Activated CD4-positive, alpha-beta memory T cell treated with anti-CD3 and anti-CD28 coated beads, Interleukin-2, amount 10 ng/mL, durations not matched to agents 7 days and 5 days (primary cell): ENCODE measurements at regions of chr17 and their contacts with region 1.

Region 1: DNA sequence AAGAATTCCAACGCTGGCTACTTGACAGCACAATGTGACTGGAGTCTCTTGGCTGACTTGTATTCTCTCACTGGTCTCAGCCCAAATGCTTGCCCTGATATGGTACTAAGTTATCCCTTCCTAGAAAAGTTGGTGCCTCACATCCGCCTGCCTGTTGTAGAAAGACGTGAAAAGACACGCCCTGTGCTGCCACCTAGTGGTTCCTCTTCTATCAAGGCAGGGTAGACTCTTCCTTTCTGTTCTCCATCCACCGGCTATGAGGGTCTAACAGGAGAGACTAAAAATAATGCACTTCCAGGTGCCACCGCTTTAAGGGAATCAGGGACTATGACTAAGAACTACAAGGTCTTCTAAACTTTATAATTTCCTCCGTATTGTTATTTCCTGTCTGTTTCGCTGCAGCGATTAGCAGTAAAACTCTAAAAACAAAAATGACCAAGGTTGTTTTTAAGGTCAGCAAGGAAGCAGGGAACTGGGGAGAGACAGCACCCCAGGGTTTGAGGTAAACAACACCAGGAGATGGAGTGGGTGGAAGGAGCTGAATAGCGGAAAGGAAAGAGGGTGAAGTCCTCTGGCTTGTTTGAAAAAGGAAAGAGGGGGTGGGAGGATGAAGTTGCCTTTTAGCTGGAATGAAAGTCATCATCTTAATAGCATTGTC is 109.5 kb downstream of the YPEL2 start:
- DNase-seq: peak; percentile 92
- H3K4me3 Mint-ChIP-seq: peak overlapping the region; percentile 60
- H3K27ac Mint-ChIP-seq: peak overlapping the region; percentile 77
- H3K4me1 Mint-ChIP-seq: peaks cover 55% of the 10 kb centered on the region
- H3K27me3 Mint-ChIP-seq: no peaks in the 10 kb centered on the region

Region 2: DNA sequence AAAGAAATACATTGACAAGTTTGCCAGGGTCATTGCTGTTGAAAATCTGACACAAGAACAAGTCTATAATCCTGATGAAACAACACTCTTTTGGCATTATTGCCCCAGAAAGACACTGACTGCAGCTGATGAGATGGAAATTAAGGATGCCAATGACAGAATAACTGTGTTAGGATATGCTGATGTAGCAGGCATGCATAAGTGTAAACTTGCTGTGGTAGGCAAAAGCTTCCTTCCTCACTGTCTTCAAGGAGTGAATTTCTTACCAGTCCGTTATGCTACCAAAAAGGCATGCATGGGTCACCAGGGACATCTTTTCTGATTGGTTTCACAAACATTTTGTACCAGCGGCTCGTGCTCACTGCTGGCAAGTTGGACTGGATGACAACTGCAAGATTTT is 210.1 kb before region 1 on chr17:
- CTCF ChIA-PET with region 1: no interaction called
- POLR2A ChIA-PET with region 1: no interaction called
- DNase-seq: no peak
- H3K4me3 Mint-ChIP-seq: no peak overlapping the region
- H3K27ac Mint-ChIP-seq: no peak overlapping the region
- H3K4me1 Mint-ChIP-seq: peaks cover 4% of the 10 kb centered on the region
- H3K27me3 Mint-ChIP-seq: no peaks in the 10 kb centered on the region

Region 3: DNA sequence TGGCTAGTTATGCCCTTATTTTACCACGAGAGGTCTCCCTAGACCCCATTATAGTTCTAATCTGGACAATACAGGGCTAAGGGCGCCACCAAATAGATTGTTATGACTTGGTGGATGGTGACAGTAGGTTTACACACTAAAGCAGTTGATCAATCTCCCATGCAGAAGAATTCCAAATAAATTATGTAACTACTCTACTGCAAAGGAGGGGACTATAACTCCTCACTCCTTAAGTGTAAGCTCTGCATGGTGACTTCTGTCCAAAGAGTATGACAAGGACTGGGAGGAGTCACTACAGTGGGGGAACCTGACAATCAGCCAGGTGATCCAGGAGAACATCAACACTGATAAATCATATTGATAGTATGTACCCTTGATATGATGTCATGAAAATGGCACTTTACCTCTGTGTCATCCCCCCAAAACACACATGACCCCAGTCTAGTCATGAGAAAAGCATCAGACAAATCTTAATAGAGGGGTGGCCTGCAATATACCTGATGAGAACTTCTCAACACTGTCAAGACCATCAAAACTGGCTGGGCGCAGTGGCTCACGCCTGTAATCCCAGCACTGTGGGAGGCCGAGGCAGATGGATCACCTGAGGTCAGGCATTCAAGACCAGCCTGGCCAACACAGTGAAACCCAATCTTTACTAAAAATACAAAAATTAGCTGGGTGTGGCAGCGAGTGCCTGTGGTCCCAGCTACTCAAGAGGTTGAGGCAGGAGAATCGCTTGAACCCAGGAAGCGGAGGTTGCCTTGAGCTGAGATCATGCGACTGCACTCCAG is 129.6 kb before region 1 on chr17:
- CTCF ChIA-PET with region 1: interaction called, 192 read pairs
- POLR2A ChIA-PET with region 1: interaction called, 7 read pairs
- DNase-seq: peak; percentile 47
- H3K4me3 Mint-ChIP-seq: no peak overlapping the region
- H3K27ac Mint-ChIP-seq: no peak overlapping the region
- H3K4me1 Mint-ChIP-seq: peaks cover 6% of the 10 kb centered on the region
- H3K27me3 Mint-ChIP-seq: no peaks in the 10 kb centered on the region

Region 4: GRCh38 chr17:59331129-59331928 is 109.6 kb before region 1 on chr17 and contains the start of gene YPEL2:
- CTCF ChIA-PET with region 1: interaction called, 187 read pairs
- POLR2A ChIA-PET with region 1: interaction called, 26 read pairs
- DNase-seq: peak; percentile 90
- H3K4me3 Mint-ChIP-seq: peak within 1 kb of the TSS; percentile 85
- H3K27ac Mint-ChIP-seq: peak within 1 kb of the TSS; percentile 89
- H3K4me1 Mint-ChIP-seq: peaks cover 65% of the 10 kb centered on the region
- H3K27me3 Mint-ChIP-seq: no peaks in the 10 kb centered on the region
- total RNA-seq, gene YPEL2: 17.1 to 18.4 TPM

Region 5: DNA sequence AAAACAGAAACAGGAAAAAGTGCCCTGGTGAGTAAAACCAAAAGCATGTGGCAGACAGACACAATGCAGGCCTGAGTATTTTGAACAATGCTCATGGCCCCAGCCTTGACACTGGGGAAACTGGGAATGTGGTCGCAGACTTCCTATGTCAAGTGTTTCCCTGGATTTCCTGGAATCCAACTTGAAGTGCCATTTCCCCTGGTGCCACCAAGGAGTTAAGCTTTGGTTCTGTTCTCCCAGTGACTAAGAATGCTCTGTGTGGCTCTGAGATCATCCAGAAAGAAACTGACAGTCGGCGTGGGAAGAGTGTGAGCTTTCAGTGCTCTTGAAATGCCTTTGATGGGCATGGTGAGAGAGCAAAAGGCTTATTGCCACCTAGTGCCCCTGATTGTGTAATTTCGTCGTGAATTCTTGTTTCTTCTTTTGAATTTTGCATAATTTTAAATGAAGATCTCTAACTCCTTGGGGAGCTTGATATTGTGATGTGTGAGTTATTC is 13.4 kb before region 1 on chr17:
- CTCF ChIA-PET with region 1: interaction called, 17 read pairs
- POLR2A ChIA-PET with region 1: interaction called, 6 read pairs
- DNase-seq: peak; percentile 29
- H3K4me3 Mint-ChIP-seq: no peak overlapping the region
- H3K27ac Mint-ChIP-seq: no peak overlapping the region
- H3K4me1 Mint-ChIP-seq: peaks cover 31% of the 10 kb centered on the region
- H3K27me3 Mint-ChIP-seq: no peaks in the 10 kb centered on the region

Region 6: DNA sequence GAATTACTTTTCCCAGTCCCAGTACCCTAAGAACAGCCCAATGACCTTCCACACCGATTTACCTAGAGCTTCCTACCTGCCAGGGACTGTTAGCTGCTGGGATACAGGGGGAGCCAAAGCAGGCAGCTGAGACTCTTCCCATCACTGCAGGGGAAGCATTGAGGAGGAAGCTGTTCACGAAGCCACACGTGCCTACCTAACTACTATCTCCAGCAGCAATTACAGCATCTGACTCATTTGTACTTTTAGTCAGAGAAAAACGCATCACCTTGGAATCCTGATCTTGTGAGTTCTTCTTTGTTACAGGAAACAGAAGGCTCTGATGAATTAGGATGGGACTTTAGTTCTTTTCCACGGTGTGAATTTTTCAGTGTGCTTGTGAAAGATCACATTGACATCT is 10.8 kb after region 1 on chr17:
- CTCF ChIA-PET with region 1: interaction called, 14 read pairs
- POLR2A ChIA-PET with region 1: interaction called, 3 read pairs
- DNase-seq: no peak
- H3K4me3 Mint-ChIP-seq: no peak overlapping the region
- H3K27ac Mint-ChIP-seq: no peak overlapping the region
- H3K4me1 Mint-ChIP-seq: no peaks in the 10 kb centered on the region
- H3K27me3 Mint-ChIP-seq: peaks cover 2% of the 10 kb centered on the region

Region 7: DNA sequence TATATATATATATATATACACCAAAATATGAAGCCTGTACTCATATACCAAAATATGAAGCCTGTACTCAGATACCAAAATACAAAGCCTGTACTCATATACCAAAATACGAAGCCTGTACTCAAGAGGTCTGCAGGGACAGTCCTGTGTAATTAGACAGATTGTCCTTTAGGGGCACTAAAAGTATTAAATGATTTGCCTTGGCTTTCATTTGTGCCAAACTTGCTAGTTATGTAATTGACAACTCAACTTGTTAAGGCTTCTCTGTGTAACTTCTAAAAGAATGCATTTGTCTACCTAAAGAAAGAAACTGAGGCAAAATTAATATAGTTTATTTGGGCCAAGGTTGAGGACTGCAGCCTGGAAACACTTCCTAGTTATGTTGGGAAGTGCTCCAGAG is 93.7 kb after region 1 on chr17:
- CTCF ChIA-PET with region 1: no interaction called
- POLR2A ChIA-PET with region 1: no interaction called
- DNase-seq: no peak
- H3K4me3 Mint-ChIP-seq: no peak overlapping the region
- H3K27ac Mint-ChIP-seq: no peak overlapping the region
- H3K4me1 Mint-ChIP-seq: no peaks in the 10 kb centered on the region
- H3K27me3 Mint-ChIP-seq: peaks cover 15% of the 10 kb centered on the region